Activated CD4-positive, alpha-beta T cell treated with anti-CD3 and anti-CD28 coated beads for 36 hours (primary cell): ENCODE measurements at regions of chr10 and their contacts with region 1.

Region 1: DNA sequence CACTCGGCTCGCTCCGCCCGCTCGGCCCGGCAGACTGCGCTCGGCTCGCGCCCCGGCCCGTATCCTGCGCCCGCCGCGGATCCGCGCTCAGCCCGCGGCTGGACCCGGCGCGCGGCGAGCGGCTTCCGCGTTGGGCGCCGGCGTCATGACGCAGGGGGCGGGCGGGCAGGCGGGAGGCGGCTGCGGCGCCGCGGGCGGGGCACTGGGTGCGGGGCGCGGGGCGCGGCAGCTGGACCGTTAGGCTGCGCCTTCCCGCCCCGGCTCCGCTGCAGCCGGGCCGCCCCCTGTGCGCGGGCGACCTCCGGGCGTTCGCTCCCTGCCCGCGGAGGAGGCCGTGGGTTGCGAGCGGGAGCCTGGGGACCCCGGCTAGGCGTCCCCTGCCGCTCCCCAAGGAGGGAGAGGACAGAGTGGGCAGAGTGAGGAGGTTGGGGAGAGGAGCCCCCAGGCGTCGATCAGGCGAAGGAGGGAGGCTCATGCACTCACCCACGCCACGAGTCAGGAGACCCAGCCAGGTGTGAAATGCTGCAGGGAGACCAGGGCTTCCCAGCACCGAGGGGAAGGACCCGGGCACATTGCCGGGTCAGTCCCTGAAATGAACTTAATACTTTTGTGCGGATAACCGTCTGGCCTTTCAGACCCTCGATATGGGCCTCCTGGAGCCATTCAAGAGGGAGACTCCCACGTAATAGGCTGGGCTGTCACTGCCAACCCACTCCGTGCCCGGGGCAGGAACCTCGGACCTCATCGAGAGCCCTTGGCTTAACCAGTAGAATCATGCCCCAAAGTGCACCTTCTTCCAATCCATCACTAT is at the start of gene PIP4K2A:
- DNase-seq: peak; percentile 86
- ATAC-seq: peak; percentile 86
- H3K4me3 Mint-ChIP-seq: peak within 1 kb of the TSS; percentile 86
- H3K27ac Mint-ChIP-seq: peak within 1 kb of the TSS; percentile 88
- H3K4me1 Mint-ChIP-seq: peaks cover 29% of the 10 kb centered on the region
- H3K27me3 Mint-ChIP-seq: no peaks in the 10 kb centered on the region
- total RNA-seq, gene PIP4K2A: 105 to 108 TPM

Region 2: GRCh38 chr10:22316285-22317120 is 398.2 kb before region 1 on chr10 and contains the start of gene COMMD3:
- CTCF ChIA-PET with region 1: no interaction called
- POLR2A ChIA-PET with region 1: no interaction called
- intact Hi-C with region 1: loop called (anchors 5 to 10 kb)
- DNase-seq: peak; percentile 88
- ATAC-seq: peak; percentile 72
- H3K4me3 Mint-ChIP-seq: peak within 1 kb of the TSS; percentile 94
- H3K27ac Mint-ChIP-seq: peak within 1 kb of the TSS; percentile 97
- H3K4me1 Mint-ChIP-seq: peaks cover 38% of the 10 kb centered on the region
- H3K27me3 Mint-ChIP-seq: peaks cover 7% of the 10 kb centered on the region
- total RNA-seq, gene COMMD3: 53.8 to 77.1 TPM

Region 3: GRCh38 chr10:22573820-22574569 is 140.7 kb before region 1 on chr10:
- CTCF ChIA-PET with region 1: interaction called, 4 read pairs
- POLR2A ChIA-PET with region 1: no interaction called
- intact Hi-C with region 1: loop called in 1 of 2 experiments (anchors 2 kb)
- DNase-seq: peak; percentile 37
- ATAC-seq: no peak
- H3K4me3 Mint-ChIP-seq: no peak overlapping the region
- H3K27ac Mint-ChIP-seq: no peak overlapping the region
- H3K4me1 Mint-ChIP-seq: peaks cover 46% of the 10 kb centered on the region
- H3K27me3 Mint-ChIP-seq: no peaks in the 10 kb centered on the region

Region 4: GRCh38 chr10:22630234-22631174 is 84.2 kb before region 1 on chr10:
- CTCF ChIA-PET with region 1: interaction called, 4 read pairs
- POLR2A ChIA-PET with region 1: interaction called, 4 read pairs
- intact Hi-C with region 1: loop called (anchors 1 to 2 kb)
- DNase-seq: peak; percentile 57
- ATAC-seq: peak; percentile 79
- H3K4me3 Mint-ChIP-seq: peak overlapping the region; percentile 61
- H3K27ac Mint-ChIP-seq: peak overlapping the region; percentile 96
- H3K4me1 Mint-ChIP-seq: peaks cover 95% of the 10 kb centered on the region
- H3K27me3 Mint-ChIP-seq: no peaks in the 10 kb centered on the region

Region 5: DNA sequence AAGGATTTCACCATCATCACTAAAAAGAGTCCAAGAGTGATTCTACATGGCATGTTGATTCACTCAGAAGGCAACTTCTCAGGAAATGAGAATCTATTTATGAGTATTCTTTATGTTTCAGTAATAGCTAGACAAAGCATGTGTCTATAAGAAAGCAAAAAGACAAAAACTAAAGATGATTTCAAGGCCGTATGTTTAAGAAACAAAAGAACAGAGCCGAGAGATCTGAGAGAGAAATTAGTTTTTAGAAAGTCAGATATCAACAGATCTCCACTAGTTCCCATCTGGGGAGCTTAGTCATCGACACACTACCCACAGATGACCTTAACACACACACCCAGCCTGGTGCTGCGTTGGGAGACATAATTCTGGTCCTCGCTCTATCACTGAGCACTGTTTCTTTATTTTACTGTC is 21.3 kb before region 1 on chr10:
- CTCF ChIA-PET with region 1: no interaction called
- POLR2A ChIA-PET with region 1: no interaction called
- intact Hi-C with region 1: loop called (anchors 1 to 2 kb)
- DNase-seq: peak; percentile 51
- ATAC-seq: peak; percentile 87
- H3K4me3 Mint-ChIP-seq: peak overlapping the region; percentile 46
- H3K27ac Mint-ChIP-seq: peak overlapping the region; percentile 97
- H3K4me1 Mint-ChIP-seq: peaks cover 91% of the 10 kb centered on the region
- H3K27me3 Mint-ChIP-seq: no peaks in the 10 kb centered on the region

Region 6: DNA sequence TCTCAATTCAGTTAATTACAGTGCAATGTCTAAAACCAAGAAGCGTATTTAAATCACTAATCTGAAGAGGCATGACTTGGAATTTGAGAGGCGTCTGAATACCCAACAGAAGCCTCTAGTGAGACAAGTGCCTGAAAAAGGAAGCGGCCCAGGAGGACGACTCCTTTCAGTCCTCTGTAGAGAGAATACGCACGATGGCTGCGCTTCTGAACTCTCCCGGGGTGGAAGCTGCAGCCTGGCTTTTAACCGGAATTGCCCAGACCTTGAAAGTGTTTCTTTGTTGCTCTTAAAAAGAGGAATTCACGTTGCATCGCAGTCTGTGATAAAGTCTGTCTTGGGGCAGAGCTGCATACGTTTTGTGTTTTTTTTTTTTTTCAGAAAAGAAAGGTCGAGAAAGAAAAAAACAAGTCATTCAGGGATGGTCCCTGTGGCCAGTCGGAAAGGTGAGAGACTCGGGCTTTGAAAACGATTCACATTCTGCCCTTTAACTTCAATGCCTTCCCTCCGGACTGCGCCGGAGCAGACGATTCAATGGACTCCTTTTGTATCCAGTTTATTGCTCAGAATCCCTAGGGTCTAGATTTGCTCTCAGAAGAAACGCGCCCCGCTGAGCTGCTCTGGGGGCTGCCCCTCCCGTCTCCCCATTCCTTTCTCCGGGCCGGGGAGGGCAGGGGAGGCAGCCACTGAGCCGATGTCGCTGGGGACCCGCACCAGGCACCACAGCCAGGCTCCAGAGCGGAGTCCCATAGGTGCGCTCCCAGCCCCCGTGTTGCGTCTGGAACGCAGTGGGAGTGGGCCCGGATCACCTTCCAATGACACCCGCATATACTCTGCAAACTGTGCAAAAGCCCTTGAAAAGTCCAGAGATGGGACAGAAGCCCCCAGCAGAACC is 476.4 kb after region 1 on chr10:
- CTCF ChIA-PET with region 1: no interaction called
- POLR2A ChIA-PET with region 1: no interaction called
- intact Hi-C with region 1: no loop called
- DNase-seq: no peak
- ATAC-seq: no peak
- H3K4me3 Mint-ChIP-seq: no peak overlapping the region
- H3K27ac Mint-ChIP-seq: no peak overlapping the region
- H3K4me1 Mint-ChIP-seq: peaks cover 9% of the 10 kb centered on the region
- H3K27me3 Mint-ChIP-seq: peaks cover 49% of the 10 kb centered on the region